ENCODE measurements at regions of chr14 and their contacts with region 1.

Region 1: DNA sequence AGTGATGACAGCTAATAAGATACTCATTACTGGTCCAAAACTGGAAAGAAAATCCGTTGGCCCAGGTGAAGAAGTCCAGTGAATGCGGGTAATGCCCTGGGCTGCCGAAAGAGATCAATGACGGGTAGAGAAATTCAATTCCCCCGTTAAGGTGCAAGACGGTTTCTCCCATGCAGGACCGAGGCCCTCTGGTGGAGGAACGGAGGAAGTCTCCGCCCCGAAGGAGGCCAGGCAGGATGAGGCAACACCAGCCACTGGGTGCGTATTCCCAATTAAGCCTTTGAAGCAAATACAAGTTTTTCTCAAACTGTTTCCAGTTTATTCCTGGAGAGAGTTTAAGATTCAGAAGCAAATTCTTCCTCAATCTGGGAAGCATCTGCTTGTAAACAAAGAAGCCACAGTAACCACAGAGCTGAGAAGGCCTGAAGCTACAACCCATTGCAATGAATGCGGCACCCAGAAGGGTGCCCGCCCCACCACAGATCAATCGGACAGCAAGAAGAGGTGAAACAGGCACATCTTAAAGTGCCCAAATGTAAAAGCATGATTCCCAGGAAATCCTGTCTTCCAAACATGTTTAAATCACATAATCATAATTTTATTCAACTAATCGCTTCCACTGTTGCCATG is 118.5 kb downstream of the TTC7B start:
- DNase-seq: peak; percentile 84 to 91
- ATAC-seq: peak; percentile 73 to 80 (median 75)
- H3K4me3 ChIP-seq: peak overlapping the region; percentile 29
- H3K27ac ChIP-seq: peak overlapping the region; percentile 94
- H3K4me1 ChIP-seq: peaks cover 73% of the 10 kb centered on the region
- H3K27me3 ChIP-seq: no peaks in the 10 kb centered on the region
- CTCF ChIP-seq: peak; percentile 97

Region 2: DNA sequence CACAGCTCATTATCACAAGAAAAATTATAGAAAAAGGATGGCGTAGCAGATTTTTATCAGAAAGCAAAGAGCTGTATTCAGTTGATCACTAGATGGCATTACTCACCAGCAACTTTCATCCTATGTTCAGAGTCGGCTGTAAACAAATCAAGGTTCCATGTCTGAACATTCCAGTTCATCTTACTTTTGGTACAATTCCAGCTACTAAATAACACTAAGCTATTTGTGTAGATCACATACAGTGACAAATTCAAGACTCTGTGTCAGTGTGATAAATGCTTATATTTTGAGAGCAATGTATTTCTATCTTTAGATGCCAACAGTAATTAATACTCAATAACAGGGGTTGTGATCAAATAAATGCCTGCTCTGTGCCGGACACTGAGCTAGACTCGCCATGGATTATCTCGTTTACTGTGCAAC is 396.0 kb before region 1 on chr14:
- intact Hi-C with region 1: loop called (anchors 5 kb)
- DNase-seq: no peak
- ATAC-seq: peak; percentile 43 to 73 (median 64)
- H3K4me3 ChIP-seq: no peak overlapping the region
- H3K27ac ChIP-seq: peak overlapping the region; percentile 74
- H3K4me1 ChIP-seq: peaks cover 34% of the 10 kb centered on the region
- H3K27me3 ChIP-seq: no peaks in the 10 kb centered on the region
- CTCF ChIP-seq: peak; percentile 66

Region 3: DNA sequence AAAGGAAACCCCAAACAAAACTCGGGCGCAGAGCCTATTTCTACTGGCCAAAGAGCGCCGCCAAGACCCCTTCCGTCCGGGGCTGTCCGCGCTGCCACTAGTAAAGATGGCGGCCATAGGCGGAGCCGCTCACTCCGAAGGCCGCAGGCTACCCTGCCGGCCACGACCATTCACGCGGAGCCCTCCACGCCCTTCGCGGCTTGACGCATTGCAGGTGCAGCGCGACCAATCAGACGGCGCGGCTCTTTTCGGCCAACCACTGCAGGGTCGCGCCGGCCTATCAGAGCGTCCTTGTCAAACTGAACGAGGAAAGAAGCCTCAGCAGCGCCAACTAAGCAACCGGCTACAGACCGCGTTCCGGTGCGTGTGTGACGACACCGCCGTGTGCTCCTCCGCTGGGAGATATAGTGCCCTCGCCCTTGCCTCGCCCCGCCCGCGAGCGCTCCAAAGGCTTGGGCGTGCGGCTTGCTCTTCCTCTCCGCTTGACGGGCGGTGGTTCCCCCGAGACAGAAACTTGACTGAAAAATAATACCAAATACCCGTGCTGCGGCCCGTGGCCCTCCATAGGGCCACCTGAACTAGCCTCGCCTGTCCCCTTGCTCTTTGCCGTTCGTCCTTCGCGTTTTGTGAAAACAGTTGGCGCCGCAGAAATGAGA is 314.5 kb before region 1 on chr14:
- intact Hi-C with region 1: loop called (anchors 5 kb)
- DNase-seq: peak; percentile 100
- ATAC-seq: peak; percentile 85 to 92 (median 90)
- H3K4me3 ChIP-seq: peak overlapping the region; percentile 76
- H3K27ac ChIP-seq: peak overlapping the region; percentile 100
- H3K4me1 ChIP-seq: peaks cover 30% of the 10 kb centered on the region
- H3K27me3 ChIP-seq: no peaks in the 10 kb centered on the region
- CTCF ChIP-seq: no peak

Region 4: GRCh38 chr14:90624728-90625400 is 72.8 kb before region 1 on chr14:
- intact Hi-C with region 1: loop called in 1 of 2 experiments (anchors 1 kb)
- DNase-seq: no peak
- ATAC-seq: peak; percentile 57 to 67 (median 64)
- H3K4me3 ChIP-seq: peak overlapping the region; percentile 26
- H3K27ac ChIP-seq: peak overlapping the region; percentile 94
- H3K4me1 ChIP-seq: peaks cover 55% of the 10 kb centered on the region
- H3K27me3 ChIP-seq: no peaks in the 10 kb centered on the region
- CTCF ChIP-seq: no peak

Region 5: GRCh38 chr14:90739318-90740068 is 41.8 kb after region 1 on chr14:
- intact Hi-C with region 1: loop called in 1 of 2 experiments (anchors 5 kb)
- DNase-seq: peak in 1 of 2 donors; percentile 64
- ATAC-seq: peak; percentile 96 to 97 (median 96)
- H3K4me3 ChIP-seq: peak overlapping the region; percentile 6
- H3K27ac ChIP-seq: peak overlapping the region; percentile 92
- H3K4me1 ChIP-seq: peaks cover 40% of the 10 kb centered on the region
- H3K27me3 ChIP-seq: no peaks in the 10 kb centered on the region
- CTCF ChIP-seq: no peak

Measured in psoas muscle (tissue), 8 donors.